ENCODE measurements at regions of chrX and their contacts with region 1.

Region 1: GRCh38 chrX:132071260-132071659 is 48.2 kb downstream of the STK26 start:
- DNase-seq: peak in 1 of 14 experiments; percentile 34
- ATAC-seq: no peak
- H3K4me3 ChIP-seq: no peak overlapping the region
- H3K4me3 Mint-ChIP-seq: no peak overlapping the region
- H3K27ac ChIP-seq: no peak overlapping the region
- H3K27ac Mint-ChIP-seq: no peak overlapping the region
- H3K4me1 ChIP-seq: no peaks in the 10 kb centered on the region
- H3K4me1 Mint-ChIP-seq: no peaks in the 10 kb centered on the region
- H3K27me3 ChIP-seq: no peaks in the 10 kb centered on the region
- H3K27me3 Mint-ChIP-seq: no peaks in the 10 kb centered on the region
- CTCF ChIP-seq: no peak

Region 2: GRCh38 chrX:131626681-131627296 is 444.5 kb before region 1 on chrX:
- CTCF ChIA-PET with region 1: no interaction called
- POLR2A ChIA-PET with region 1: no interaction called
- intact Hi-C with region 1: no loop called
- DNase-seq: no peak
- ATAC-seq: no peak
- H3K4me3 ChIP-seq: no peak overlapping the region
- H3K4me3 Mint-ChIP-seq: no peak overlapping the region
- H3K27ac ChIP-seq: no peak overlapping the region
- H3K27ac Mint-ChIP-seq: no peak overlapping the region
- H3K4me1 ChIP-seq: no peaks in the 10 kb centered on the region
- H3K4me1 Mint-ChIP-seq: no peaks in the 10 kb centered on the region
- H3K27me3 ChIP-seq: no peaks in the 10 kb centered on the region
- H3K27me3 Mint-ChIP-seq: peaks cover 25% of the 10 kb centered on the region
- CTCF ChIP-seq: no peak

Region 3: DNA sequence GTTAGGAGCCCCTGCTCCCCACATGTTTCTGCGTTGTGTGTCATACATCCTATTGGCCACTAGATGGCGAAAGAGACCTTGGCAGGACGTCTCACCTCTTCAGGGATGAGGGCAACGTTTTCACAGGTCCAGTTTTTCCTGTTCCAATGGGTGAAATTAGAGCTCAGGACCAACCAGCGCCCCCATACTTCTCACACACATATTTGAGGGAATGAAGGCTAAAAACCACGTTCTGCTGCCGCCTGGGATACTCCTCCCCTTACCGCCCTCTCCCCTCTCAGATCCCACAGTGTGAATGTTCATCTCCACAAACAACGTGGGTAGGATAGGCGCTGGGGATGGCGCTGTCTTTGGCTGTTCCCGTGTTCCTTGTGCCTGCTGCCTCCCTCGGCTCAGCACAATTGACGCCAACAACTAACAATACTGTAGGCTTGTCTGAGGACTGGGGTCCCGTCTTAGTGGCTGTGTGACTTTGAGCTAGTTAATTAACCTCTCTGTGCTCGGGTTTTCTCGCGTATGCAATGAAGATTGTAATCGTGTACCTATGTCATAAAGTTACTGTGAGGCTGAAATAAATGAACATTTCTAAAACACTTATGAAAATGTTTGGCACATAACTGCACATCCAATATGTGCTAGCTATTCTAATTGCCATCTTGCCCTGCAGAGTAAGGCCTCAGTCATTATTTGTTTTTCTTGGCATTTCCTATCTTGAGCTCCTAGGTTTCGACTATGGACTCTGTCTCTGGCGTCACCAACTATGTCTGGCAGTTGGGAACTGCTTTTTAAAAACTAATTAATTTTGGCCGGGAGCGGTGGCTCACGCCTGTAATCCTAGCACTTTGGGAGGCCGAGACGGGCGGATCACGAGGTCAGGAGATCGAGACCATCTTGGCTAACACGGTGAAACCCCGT is 229.5 kb before region 1 on chrX:
- CTCF ChIA-PET with region 1: no interaction called
- POLR2A ChIA-PET with region 1: interaction called, 5 read pairs
- intact Hi-C with region 1: loop called in 1 of 2 experiments (anchors 5 kb)
- DNase-seq: peak in 7 of 14 experiments; percentile 2 to 72 (median 43)
- ATAC-seq: peak; percentile 64
- H3K4me3 ChIP-seq: no peak overlapping the region
- H3K4me3 Mint-ChIP-seq: no peak overlapping the region
- H3K27ac ChIP-seq: no peak overlapping the region
- H3K27ac Mint-ChIP-seq: no peak overlapping the region
- H3K4me1 ChIP-seq: peaks cover 6% of the 10 kb centered on the region
- H3K4me1 Mint-ChIP-seq: no peaks in the 10 kb centered on the region
- H3K27me3 ChIP-seq: no peaks in the 10 kb centered on the region
- H3K27me3 Mint-ChIP-seq: no peaks in the 10 kb centered on the region
- CTCF ChIP-seq: peak; percentile 63

Region 4: GRCh38 chrX:131854581-131854980 is 216.7 kb before region 1 on chrX:
- CTCF ChIA-PET with region 1: no interaction called
- POLR2A ChIA-PET with region 1: no interaction called
- intact Hi-C with region 1: loop called (anchors 1 to 5 kb)
- DNase-seq: peak in 3 of 14 experiments; percentile 28 to 47 (median 44)
- ATAC-seq: no peak
- H3K4me3 ChIP-seq: no peak overlapping the region
- H3K4me3 Mint-ChIP-seq: no peak overlapping the region
- H3K27ac ChIP-seq: no peak overlapping the region
- H3K27ac Mint-ChIP-seq: no peak overlapping the region
- H3K4me1 ChIP-seq: no peaks in the 10 kb centered on the region
- H3K4me1 Mint-ChIP-seq: no peaks in the 10 kb centered on the region
- H3K27me3 ChIP-seq: no peaks in the 10 kb centered on the region
- H3K27me3 Mint-ChIP-seq: no peaks in the 10 kb centered on the region
- CTCF ChIP-seq: peak; percentile 55

Region 5: DNA sequence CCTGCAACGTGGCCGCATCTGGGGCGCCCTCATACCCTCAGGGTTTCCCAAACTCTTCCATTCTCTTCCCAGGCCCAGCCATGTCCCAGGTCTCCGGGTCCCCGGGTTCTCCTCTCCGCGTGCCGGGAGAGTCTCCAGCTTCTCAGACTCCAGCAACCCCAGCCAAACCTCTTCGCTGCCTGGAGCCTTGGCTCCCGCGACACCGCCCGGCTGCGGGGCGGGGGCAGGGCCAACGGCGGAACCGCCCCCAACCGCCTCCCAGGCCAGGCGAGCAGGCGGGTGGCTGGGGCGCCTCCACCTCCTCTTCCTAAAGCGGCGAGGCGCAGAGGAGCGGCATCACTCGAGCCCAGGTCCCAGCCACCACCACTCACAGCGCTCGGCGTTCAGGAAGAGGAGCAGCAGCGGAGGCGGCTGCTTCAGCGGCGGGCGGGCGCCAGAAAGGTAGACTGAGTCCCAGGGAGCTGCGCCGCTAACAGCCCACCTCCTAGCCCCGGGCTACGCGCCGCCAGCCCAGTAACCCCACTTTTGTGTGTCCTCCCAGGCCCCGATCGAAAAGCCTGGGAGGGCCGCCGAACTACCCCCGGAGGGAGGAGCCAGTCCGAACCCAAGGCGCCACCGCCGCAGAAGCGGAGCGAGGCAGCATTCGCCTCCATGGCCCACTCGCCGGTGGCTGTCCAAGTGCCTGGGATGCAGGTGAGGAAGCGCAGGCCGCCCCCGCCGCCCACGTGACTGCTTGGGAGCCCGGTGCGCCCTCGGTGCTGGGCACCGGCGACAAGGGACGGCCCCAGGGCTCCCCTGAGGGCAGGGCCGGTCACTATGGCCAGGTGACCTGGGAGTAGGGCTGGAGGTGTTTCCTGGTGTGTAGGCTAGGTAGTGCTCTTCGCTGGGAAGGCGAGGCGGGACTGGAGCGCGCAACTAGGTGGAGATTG is 48.0 kb before region 1 on chrX and contains the start of gene STK26:
- CTCF ChIA-PET with region 1: no interaction called
- POLR2A ChIA-PET with region 1: interaction called, 3 read pairs
- intact Hi-C with region 1: loop called (anchors 5 kb)
- DNase-seq: peak; percentile 58 to 89 (median 73)
- ATAC-seq: peak; percentile 88
- H3K4me3 ChIP-seq: peak within 1 kb of the TSS; percentile 89
- H3K4me3 Mint-ChIP-seq: peak within 1 kb of the TSS; percentile 97
- H3K27ac ChIP-seq: peak within 1 kb of the TSS; percentile 62 to 81
- H3K27ac Mint-ChIP-seq: peak within 1 kb of the TSS; percentile 90
- H3K4me1 ChIP-seq: peaks cover 16% of the 10 kb centered on the region
- H3K4me1 Mint-ChIP-seq: peaks cover 35% of the 10 kb centered on the region
- H3K27me3 ChIP-seq: no peaks in the 10 kb centered on the region
- H3K27me3 Mint-ChIP-seq: no peaks in the 10 kb centered on the region
- CTCF ChIP-seq: no peak
- total RNA-seq, gene STK26: 25.2 to 27.9 TPM

Region 6: GRCh38 chrX:132086672-132087071 is 15.4 kb after region 1 on chrX:
- CTCF ChIA-PET with region 1: no interaction called
- POLR2A ChIA-PET with region 1: no interaction called
- intact Hi-C with region 1: no loop called
- DNase-seq: no peak
- ATAC-seq: no peak
- H3K4me3 ChIP-seq: no peak overlapping the region
- H3K4me3 Mint-ChIP-seq: no peak overlapping the region
- H3K27ac ChIP-seq: no peak overlapping the region
- H3K27ac Mint-ChIP-seq: no peak overlapping the region
- H3K4me1 ChIP-seq: no peaks in the 10 kb centered on the region
- H3K4me1 Mint-ChIP-seq: no peaks in the 10 kb centered on the region
- H3K27me3 ChIP-seq: no peaks in the 10 kb centered on the region
- H3K27me3 Mint-ChIP-seq: no peaks in the 10 kb centered on the region
- CTCF ChIP-seq: no peak

Measured in CD4-positive, alpha-beta T cell (primary cell).